Body of pancreas (tissue), 4 donors: ENCODE measurements at regions of chr11 and their contacts with region 1.

Region 1: GRCh38 chr11:30346068-30346688 is 23.3 kb downstream of the ARL14EP start:
- DNase-seq: peak in 1 of 4 donors; percentile 18
- ATAC-seq: peak; percentile 59
- H3K4me3 ChIP-seq: no peak overlapping the region
- H3K27ac ChIP-seq: no peak overlapping the region
- H3K4me1 ChIP-seq: no peaks in the 10 kb centered on the region
- H3K27me3 ChIP-seq: no peaks in the 10 kb centered on the region
- CTCF ChIP-seq: peak in 6 of 7 experiments; percentile 44 to 81 (median 62)
- POLR2A ChIP-seq: no peak

Region 2: DNA sequence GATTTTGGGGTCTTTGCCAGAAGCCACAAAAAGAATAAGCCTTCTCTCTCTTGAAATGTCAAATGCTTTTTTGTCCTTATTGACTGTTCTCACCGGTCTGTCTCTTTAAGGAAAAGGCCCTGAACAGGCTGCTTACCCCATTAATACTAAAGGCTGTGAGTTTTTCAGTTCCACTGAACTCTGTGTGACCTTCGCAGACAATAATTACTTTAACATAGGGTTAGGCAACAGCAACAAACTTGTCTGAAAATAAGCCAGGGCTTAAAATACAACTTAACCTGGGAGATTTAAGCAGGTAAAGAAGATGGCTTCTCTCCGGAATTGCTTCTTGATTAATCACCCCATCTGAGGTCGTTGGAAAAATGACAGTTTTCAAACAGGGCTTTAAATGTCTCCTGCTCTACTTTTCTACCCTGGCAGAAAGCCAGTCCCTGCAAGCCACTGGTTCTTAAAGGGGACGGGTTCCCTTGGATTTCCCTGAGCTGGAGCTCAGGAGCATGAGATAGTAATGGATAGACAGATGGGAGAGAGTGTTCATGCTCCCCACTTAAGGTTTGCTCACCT is 46.1 kb after region 1 on chr11:
- intact Hi-C with region 1: no loop called
- DNase-seq: peak in 3 of 4 donors; percentile 15 to 41 (median 29)
- ATAC-seq: peak; percentile 58
- H3K4me3 ChIP-seq: no peak overlapping the region
- H3K27ac ChIP-seq: peak overlapping the region in 1 of 4 donors; percentile 34
- H3K4me1 ChIP-seq: peaks cover 6% of the 10 kb centered on the region
- H3K27me3 ChIP-seq: no peaks in the 10 kb centered on the region
- CTCF ChIP-seq: no peak
- POLR2A ChIP-seq: no peak

Region 3: DNA sequence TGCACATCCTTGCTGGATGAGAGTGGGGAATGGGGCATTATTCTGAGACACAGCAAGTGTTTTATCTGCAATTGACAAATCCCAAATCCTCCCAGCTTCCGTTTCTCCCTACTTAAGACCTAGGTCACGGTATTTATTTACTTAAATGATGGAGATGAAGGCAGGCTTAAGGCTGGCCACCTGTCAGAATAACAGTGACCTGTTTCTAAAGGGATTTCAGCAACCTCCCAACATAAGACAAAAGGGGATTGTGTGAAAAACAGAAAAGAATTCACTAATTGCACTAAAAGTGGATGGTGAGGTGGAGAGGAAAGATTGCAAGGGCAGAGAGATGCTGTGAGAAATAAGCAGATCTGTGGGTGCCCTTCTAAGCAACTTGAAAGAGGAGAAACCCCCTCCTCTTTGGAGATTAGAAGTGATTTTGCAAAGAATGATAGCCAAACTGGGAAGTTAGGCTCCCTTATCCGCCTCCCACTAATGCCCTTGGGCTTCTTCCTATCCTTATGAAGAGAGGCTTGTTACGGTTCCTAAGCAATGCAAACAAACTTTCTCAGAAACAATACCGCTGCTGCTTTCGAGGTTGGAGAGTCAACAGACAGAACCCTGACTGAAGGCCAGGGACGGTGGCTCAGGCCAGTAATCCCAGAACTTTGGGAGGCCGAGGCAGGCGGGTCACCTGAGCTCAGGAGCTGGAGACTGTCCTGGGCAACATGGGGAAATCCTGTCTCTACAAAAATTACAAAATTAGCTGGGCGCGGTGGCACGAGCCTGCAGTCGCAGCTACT is 61.0 kb after region 1 on chr11:
- intact Hi-C with region 1: no loop called
- DNase-seq: no peak
- ATAC-seq: no peak
- H3K4me3 ChIP-seq: no peak overlapping the region
- H3K27ac ChIP-seq: no peak overlapping the region
- H3K4me1 ChIP-seq: no peaks in the 10 kb centered on the region
- H3K27me3 ChIP-seq: no peaks in the 10 kb centered on the region
- CTCF ChIP-seq: no peak
- POLR2A ChIP-seq: no peak

Region 4: GRCh38 chr11:30855383-30856006 is 509.3 kb after region 1 on chr11:
- intact Hi-C with region 1: loop called (anchors 5 kb)
- DNase-seq: no peak
- ATAC-seq: peak; percentile 55
- H3K4me3 ChIP-seq: no peak overlapping the region
- H3K27ac ChIP-seq: no peak overlapping the region
- H3K4me1 ChIP-seq: no peaks in the 10 kb centered on the region
- H3K27me3 ChIP-seq: no peaks in the 10 kb centered on the region
- CTCF ChIP-seq: peak in 6 of 7 experiments; percentile 35 to 58 (median 52)
- POLR2A ChIP-seq: no peak

Region 5: DNA sequence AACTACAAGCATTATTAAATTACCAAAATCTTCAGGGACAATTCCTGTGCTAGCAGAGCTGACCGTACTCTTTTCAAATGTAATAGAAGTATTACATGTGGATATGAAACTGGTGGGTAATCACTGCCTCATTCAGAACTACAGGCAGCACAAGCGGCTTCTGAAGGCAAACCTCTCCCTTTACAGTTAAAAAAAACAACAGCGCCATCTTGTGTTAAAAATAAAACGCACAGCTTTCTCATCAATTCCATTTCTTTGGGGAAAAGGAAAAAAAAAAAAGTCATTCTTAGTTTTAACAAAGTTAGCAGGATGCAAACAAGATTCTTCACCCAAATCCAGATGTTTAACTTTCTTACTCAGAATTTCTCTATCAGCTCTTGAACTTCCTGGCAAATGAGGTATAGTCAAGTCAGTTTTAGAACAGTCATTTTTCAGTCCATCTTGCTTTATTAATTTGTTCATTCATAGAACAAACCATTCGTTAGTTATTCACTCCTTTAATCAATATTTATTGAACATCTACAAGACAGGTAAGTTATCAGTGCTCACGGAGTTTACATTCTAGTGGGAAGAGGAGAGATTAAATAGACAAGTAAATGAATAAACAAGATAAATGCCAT is 571.8 kb after region 1 on chr11:
- intact Hi-C with region 1: loop called (anchors 10 kb)
- DNase-seq: peak in 3 of 4 donors; percentile 15 to 35 (median 18)
- ATAC-seq: peak; percentile 53
- H3K4me3 ChIP-seq: no peak overlapping the region
- H3K27ac ChIP-seq: no peak overlapping the region
- H3K4me1 ChIP-seq: no peaks in the 10 kb centered on the region
- H3K27me3 ChIP-seq: no peaks in the 10 kb centered on the region
- CTCF ChIP-seq: peak; percentile 38 to 86 (median 65)
- POLR2A ChIP-seq: no peak